Mammary epithelial cell (primary cell): ENCODE measurements at regions of chr17 and their contacts with region 1.

Region 1: DNA sequence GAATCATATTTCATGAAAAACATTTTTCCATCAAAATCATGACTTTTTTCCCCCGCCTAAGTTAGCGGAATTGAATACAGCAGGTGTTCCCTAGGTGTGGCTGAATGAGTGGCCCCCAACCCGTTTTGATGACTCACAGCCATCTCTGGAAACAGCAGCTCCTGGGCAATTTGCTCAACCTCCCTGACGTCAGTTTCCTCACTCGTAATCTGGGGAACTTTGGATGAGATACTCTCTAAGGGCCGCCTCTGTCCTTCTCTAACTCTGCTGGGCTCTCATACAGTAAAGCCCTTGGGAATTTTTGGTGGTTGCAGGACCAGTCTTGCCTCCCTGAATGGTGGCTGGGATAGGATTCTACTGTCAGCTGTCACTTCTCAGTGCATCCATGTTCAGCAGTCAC is 11.6 kb upstream of the NTN1 start:
- DNase-seq: peak; percentile 56
- H3K4me3 ChIP-seq: no peak overlapping the region
- H3K27ac ChIP-seq: no peak overlapping the region
- H3K4me1 ChIP-seq: no peaks in the 10 kb centered on the region
- H3K27me3 ChIP-seq: peaks cover 8% of the 10 kb centered on the region
- CTCF ChIP-seq: no peak

Region 2: DNA sequence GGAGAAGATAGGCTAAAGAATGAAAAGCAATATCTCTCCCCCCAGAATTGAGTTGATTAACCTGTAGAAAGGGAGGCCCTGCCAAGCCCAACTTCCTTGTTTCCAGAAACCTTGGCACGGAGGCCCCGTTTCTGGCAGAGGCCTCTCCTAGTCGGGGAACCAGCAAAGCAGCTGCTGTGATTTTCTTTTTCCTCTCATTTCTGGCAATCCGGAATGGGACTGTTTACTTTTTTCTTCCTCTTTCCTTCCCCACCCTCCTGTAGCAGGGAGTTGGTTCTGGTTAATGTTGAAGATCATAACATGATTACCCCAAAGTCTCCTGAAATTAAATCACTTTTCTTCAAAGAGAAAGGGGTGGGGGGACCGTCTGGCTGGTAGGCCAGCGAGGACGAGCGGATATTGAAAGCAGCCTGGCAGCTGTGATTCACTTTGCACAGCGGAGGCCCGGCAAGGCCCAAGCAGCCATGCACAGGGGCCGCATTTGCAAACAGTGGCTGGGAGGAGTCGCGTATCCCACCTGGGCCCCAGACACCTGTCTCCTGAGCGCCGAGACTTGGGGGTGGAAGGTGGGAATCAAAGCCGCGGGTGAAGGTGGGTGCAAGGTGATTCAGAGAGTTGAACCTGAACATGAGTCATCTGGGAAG is 63.1 kb after region 1 on chr17:
- CTCF ChIA-PET with region 1: no interaction called
- dilution Hi-C with region 1: loop called (anchors 5 kb)
- in situ Hi-C with region 1: no loop called
- intact Hi-C with region 1: no loop called
- DNase-seq: no peak
- H3K4me3 ChIP-seq: no peak overlapping the region
- H3K27ac ChIP-seq: no peak overlapping the region
- H3K4me1 ChIP-seq: peaks cover 4% of the 10 kb centered on the region
- H3K27me3 ChIP-seq: no peaks in the 10 kb centered on the region
- CTCF ChIP-seq: no peak